Dendritic cell treated with granulocyte-macrophage colony-stimulating factor and Interleukin-4, amounts not matched to agents 40 ng/mL and 50 ng/mL, for 4 days (primary cell): ENCODE measurements at regions of chr19 and their contacts with region 1.

Region 1: DNA sequence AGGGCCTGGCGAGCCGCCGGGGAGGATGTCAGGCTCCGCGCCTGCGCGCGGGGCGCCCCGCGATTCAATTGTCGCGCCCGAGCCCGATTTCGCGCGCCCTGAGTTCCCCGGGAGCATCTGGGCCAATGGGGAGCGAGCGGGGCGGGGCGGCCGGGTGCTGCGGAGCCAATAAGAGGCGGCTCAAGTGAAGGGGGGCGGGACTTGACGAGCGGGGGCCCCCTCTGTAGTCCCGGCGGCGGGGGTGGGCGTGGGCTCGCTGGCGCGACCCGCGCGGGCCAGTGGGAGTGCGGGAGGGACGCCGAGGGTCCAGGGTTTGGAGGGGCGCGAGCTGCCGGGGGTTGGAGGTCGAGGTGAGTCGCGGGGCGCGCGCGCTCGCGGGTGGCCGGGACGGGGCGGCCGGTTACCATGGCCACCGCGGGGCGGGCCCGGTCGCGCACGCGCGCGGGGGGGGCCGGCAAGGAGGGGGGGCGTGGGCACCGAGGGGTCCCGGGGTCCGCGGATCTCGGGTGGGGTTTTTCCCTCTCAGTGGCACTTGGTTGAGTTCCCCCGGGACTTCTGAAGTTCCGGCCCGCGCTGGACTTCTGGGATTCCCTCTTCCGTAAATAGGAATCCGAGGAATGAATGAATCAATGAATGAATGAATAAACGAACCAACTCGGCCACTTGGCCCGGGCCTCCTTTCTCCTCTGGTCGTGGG is 744 bp downstream of the UHRF1 start:
- H3K4me3 Mint-ChIP-seq: peak overlapping the region; percentile 73
- H3K27ac Mint-ChIP-seq: peak overlapping the region; percentile 73
- H3K4me1 Mint-ChIP-seq: peaks cover 60% of the 10 kb centered on the region
- H3K27me3 Mint-ChIP-seq: no peaks in the 10 kb centered on the region

Region 2: GRCh38 chr19:4732680-4733114 is 177.3 kb before region 1 on chr19:
- intact Hi-C with region 1: loop called (anchors 5 kb)
- H3K4me3 Mint-ChIP-seq: no peak overlapping the region
- H3K27ac Mint-ChIP-seq: no peak overlapping the region
- H3K4me1 Mint-ChIP-seq: peaks cover 15% of the 10 kb centered on the region
- H3K27me3 Mint-ChIP-seq: peaks cover 32% of the 10 kb centered on the region

Region 3: GRCh38 chr19:4815426-4816201 is 94.4 kb before region 1 on chr19:
- intact Hi-C with region 1: loop called (anchors 2 kb)
- H3K4me3 Mint-ChIP-seq: peak overlapping the region; percentile 76
- H3K27ac Mint-ChIP-seq: peak overlapping the region; percentile 80
- H3K4me1 Mint-ChIP-seq: peaks cover 62% of the 10 kb centered on the region
- H3K27me3 Mint-ChIP-seq: no peaks in the 10 kb centered on the region

Region 4: GRCh38 chr19:4871711-4872110 is 38.3 kb before region 1 on chr19:
- intact Hi-C with region 1: loop called (anchors 1 kb)
- H3K4me3 Mint-ChIP-seq: no peak overlapping the region
- H3K27ac Mint-ChIP-seq: peak overlapping the region; percentile 65
- H3K4me1 Mint-ChIP-seq: peaks cover 50% of the 10 kb centered on the region
- H3K27me3 Mint-ChIP-seq: no peaks in the 10 kb centered on the region

Region 5: DNA sequence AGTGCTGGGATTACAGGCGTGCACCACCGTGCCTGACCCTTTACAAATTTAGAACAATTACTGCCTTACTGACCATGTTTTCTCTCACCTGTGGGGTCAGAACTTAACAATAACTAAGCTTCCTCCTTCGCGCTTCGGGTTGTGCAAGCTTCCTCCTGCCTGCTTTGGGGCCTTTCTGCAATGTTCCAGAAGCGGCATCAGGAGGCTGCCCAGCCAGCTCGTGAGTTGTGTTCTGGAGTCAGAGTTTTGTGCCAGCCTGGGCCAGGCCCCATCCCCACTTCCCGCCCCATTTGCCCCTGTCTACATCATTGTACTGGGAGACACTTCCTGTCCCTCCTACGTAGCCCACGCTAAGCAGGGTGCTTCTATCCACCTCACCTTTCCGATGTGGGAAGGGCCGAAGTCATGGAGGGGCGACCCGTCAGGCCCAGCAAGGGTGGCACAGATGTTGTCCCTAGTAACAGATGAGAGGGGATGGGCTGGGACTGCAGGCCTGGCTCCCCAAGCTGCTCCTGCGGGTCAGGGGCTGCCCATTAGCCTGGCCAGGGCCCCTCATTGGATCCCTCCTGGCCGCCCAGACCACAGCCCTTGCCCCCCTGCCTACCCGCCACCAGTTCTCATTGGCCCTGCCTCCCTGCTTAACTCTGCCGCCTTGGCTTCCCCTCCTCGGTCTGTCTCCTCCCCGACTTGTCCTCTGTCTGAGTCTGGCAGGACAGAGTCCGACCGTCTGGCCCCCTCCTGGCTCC is 12.7 kb after region 1 on chr19:
- intact Hi-C with region 1: no loop called
- H3K4me3 Mint-ChIP-seq: no peak overlapping the region
- H3K27ac Mint-ChIP-seq: peak overlapping the region; percentile 53
- H3K4me1 Mint-ChIP-seq: peaks cover 20% of the 10 kb centered on the region
- H3K27me3 Mint-ChIP-seq: no peaks in the 10 kb centered on the region

Region 6: GRCh38 chr19:4968462-4969291 is 58.6 kb after region 1 on chr19 and contains the start of gene KDM4B:
- intact Hi-C with region 1: loop called (anchors 5 kb)
- H3K4me3 Mint-ChIP-seq: peak within 1 kb of the TSS; percentile 92
- H3K27ac Mint-ChIP-seq: peak within 1 kb of the TSS; percentile 86
- H3K4me1 Mint-ChIP-seq: peaks cover 46% of the 10 kb centered on the region
- H3K27me3 Mint-ChIP-seq: no peaks in the 10 kb centered on the region

Region 7: DNA sequence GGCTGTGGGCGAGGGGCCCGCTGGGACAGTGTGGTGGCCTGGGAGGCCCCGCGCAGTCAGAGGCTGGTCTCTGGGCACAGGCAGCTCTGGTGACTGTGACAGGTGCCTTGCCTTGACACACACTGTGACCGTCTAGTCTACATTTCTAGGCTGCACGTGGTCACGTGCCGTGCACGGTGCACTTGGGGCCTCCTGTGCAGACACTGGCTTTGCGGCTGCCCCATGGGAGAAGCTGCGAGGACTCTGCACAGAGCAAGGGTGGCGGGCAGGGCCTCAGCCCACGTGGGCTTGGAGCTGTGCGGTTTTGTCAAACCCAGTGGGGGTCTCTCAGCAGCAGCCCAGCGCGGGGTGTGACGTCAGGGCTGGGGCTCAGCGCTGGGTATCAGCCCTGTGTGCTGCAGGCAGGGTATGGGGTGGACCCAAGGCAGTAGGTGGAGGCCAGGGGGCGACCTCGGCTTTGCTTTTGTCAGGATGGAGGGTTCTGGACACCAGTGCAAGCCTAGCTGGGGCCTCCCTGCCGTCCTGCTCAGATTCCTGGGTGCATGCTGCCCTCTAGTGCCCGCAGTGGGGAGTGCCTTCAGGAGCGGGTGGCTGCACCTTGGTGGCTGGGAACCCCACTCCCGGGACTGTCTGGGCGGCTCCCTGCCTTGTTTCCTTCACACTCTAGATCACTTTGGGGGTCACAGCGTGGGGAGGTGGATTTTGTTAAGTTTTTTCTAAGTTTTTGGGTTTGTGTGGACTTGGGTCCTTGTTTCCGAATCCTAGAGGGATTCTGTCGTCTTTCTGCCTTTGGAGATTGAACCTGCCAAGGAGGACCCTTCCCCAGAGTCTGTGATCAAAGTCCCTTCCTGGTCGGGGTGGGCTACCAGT is 121.4 kb after region 1 on chr19:
- intact Hi-C with region 1: loop called (anchors 5 kb)
- H3K4me3 Mint-ChIP-seq: no peak overlapping the region
- H3K27ac Mint-ChIP-seq: no peak overlapping the region
- H3K4me1 Mint-ChIP-seq: peaks cover 31% of the 10 kb centered on the region
- H3K27me3 Mint-ChIP-seq: no peaks in the 10 kb centered on the region